Naive thymus-derived CD4-positive, alpha-beta T cell (primary cell): ENCODE measurements at regions of chr11 and their contacts with region 1.

Region 1: GRCh38 chr11:43532041-43532440 is 148.5 kb upstream of the HSD17B12 start:
- DNase-seq: no peak
- ATAC-seq: no peak
- H3K4me3 ChIP-seq: no peak overlapping the region
- H3K4me3 Mint-ChIP-seq: no peak overlapping the region
- H3K27ac ChIP-seq: no peak overlapping the region
- H3K27ac Mint-ChIP-seq: no peak overlapping the region
- H3K4me1 ChIP-seq: no peaks in the 10 kb centered on the region
- H3K4me1 Mint-ChIP-seq: no peaks in the 10 kb centered on the region
- H3K27me3 ChIP-seq: no peaks in the 10 kb centered on the region
- H3K27me3 Mint-ChIP-seq: peaks cover 7 to 31% (median 21%) of the 10 kb centered on the region in 5 donors

Region 2: DNA sequence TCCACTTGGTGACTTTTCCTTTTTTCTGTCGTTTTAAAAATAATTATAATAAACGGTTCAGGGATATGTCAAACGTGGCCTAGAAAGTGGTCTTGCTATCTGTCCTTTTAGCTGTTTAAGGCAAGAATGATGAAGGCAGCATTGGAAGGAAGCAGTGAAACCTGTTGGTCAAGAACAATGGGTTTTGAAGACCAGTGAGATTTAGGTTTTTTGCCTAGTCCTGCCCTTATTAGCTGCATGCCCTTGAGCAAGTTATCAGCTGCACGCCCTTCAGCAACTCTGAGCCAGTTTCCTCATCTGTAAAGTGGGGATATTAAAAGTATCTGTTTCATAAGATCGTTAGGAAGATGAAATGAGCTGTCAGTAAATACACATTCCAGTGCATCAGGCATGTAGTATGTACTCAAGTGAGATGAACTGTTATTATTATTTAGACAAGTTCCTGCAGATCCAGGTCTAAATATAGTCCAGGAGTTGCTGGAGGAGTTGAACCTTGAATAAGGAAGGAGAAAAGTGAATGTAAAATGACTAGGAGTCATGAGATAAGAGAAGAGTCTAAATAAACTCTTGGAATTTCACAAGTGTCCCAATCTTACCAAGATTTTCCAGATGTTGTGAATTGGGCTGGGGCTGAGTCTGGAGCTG is 57.7 kb after region 1 on chr11:
- CTCF ChIA-PET with region 1: no interaction called
- POLR2A ChIA-PET with region 1: no interaction called
- intact Hi-C with region 1: loop called in 1 of 2 experiments (anchors 10 kb)
- DNase-seq: no peak
- ATAC-seq: no peak
- H3K4me3 ChIP-seq: no peak overlapping the region
- H3K4me3 Mint-ChIP-seq: no peak overlapping the region
- H3K27ac ChIP-seq: no peak overlapping the region
- H3K27ac Mint-ChIP-seq: no peak overlapping the region
- H3K4me1 ChIP-seq: no peaks in the 10 kb centered on the region
- H3K4me1 Mint-ChIP-seq: no peaks in the 10 kb centered on the region
- H3K27me3 ChIP-seq: no peaks in the 10 kb centered on the region
- H3K27me3 Mint-ChIP-seq: peaks cover 42 to 69% (median 53%) of the 10 kb centered on the region in 5 donors